ENCODE measurements at regions of chr19 and their contacts with region 1.

Region 1: GRCh38 chr19:47032171-47032811 is 12.7 kb downstream of the NPAS1 start:
- DNase-seq: no peak
- H3K4me3 ChIP-seq: no peak overlapping the region
- H3K27ac ChIP-seq: no peak overlapping the region
- H3K4me1 ChIP-seq: peaks cover 17% of the 10 kb centered on the region
- H3K27me3 ChIP-seq: no peaks in the 10 kb centered on the region
- CTCF ChIP-seq: peak; percentile 37 to 64 (median 60)
- POLR2A ChIP-seq: no peak

Region 2: GRCh38 chr19:48169585-48170037 is 1137.3 kb after region 1 on chr19:
- intact Hi-C with region 1: loop called (anchors 5 kb)
- DNase-seq: no peak
- H3K4me3 ChIP-seq: peak overlapping the region; percentile 72 to 85
- H3K27ac ChIP-seq: peak overlapping the region; percentile 83
- H3K4me1 ChIP-seq: peaks cover 20% of the 10 kb centered on the region
- H3K27me3 ChIP-seq: no peaks in the 10 kb centered on the region
- CTCF ChIP-seq: no peak
- POLR2A ChIP-seq: no peak

Region 3: DNA sequence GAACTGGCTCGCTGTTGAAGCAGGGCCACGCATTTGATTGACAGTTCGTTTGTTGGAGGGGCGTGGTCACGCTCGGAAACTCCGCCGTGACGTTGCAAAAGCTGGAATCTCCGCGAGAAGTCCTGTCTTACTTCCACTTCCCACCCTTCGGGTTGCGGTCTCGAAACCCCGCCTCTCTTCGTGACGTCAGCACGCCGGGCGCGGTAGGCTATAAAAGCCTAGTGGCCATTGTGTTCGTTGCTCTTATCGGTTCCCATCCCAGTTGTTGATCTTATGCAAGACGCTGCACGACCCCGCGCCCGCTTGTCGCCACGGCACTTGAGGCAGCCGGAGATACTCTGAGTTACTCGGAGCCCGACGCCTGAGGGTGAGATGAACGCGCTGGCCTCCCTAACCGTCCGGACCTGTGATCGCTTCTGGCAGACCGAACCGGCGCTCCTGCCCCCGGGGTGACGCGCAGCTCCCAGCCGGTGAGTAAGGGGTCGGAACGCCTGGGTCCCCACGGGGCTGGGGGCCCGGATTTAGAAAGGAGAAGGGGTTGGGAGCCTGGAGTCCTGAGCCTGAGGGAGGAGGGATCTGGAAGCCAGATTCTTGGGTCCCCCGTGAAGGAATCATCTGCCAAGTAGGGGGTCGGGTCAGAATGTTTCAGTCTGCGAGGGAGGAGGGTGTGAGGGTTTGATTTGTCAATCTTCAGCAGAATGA is 1840.0 kb after region 1 on chr19 and contains the start of gene PPP1R15A:
- intact Hi-C with region 1: loop called (anchors 5 kb)
- DNase-seq: peak; percentile 100
- H3K4me3 ChIP-seq: peak within 1 kb of the TSS; percentile 88 to 99
- H3K27ac ChIP-seq: peak within 1 kb of the TSS; percentile 100
- H3K4me1 ChIP-seq: peaks cover 43% of the 10 kb centered on the region
- H3K27me3 ChIP-seq: no peaks in the 10 kb centered on the region
- CTCF ChIP-seq: peak in 1 of 3 experiments; percentile 49
- POLR2A ChIP-seq: peak in 1 of 2 donors; percentile 99
- total RNA-seq, gene PPP1R15A: 52.1 TPM

Measured in vagina (tissue), 2 donors.